Naive thymus-derived CD4-positive, alpha-beta T cell (primary cell): ENCODE measurements at regions of chr19 and their contacts with region 1.

Region 1: GRCh38 chr19:57362997-57363705 is at the starts of genes TRAPPC2B and ZNF547:
- DNase-seq: peak; percentile 89 to 99 (median 98)
- ATAC-seq: peak; percentile 97
- H3K4me3 ChIP-seq: peak within 1 kb of the TSS; percentile 74
- H3K4me3 Mint-ChIP-seq: peak within 1 kb of the TSS; percentile 90 to 97 (median 94)
- H3K27ac ChIP-seq: peak within 1 kb of the TSS; percentile 84
- H3K27ac Mint-ChIP-seq: peak within 1 kb of the TSS; percentile 94 to 100 (median 97)
- H3K4me1 ChIP-seq: peaks cover 9 to 14% of the 10 kb centered on the region in 2 donors
- H3K4me1 Mint-ChIP-seq: peaks cover 12 to 26% (median 18%) of the 10 kb centered on the region in 7 donors
- H3K27me3 ChIP-seq: no peaks in the 10 kb centered on the region
- H3K27me3 Mint-ChIP-seq: peaks cover 0 to 2% (median 0%) of the 10 kb centered on the region in 5 donors
- total RNA-seq, gene TRAPPC2B: 7.7 to 11.8 (median 9.0) TPM
- total RNA-seq, gene ZNF547: 0.40 to 10.1 (median 3.6) TPM

Region 2: DNA sequence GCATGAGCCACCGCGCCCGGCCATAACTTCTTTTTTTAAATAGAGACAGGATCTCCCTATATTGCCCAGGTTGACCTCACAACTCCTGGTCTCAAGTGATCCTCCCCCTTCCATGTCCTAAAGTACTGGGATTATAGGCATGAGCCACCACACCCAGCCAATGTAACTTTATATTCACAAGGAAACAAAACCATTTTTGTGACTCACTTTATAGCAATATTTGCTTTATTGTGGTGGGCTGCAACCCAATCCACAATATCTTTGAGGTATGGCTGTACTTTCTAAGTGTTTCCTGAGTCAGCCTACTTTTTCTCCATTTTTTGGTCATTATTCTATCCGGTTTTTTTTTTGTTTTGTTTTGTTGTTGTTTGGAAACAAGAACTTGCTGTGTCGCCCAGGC is 210.2 kb before region 1 on chr19:
- CTCF ChIA-PET with region 1: no interaction called
- POLR2A ChIA-PET with region 1: no interaction called
- intact Hi-C with region 1: no loop called
- DNase-seq: no peak
- ATAC-seq: no peak
- H3K4me3 ChIP-seq: no peak overlapping the region
- H3K4me3 Mint-ChIP-seq: no peak overlapping the region
- H3K27ac ChIP-seq: no peak overlapping the region
- H3K27ac Mint-ChIP-seq: no peak overlapping the region
- H3K4me1 ChIP-seq: no peaks in the 10 kb centered on the region
- H3K4me1 Mint-ChIP-seq: no peaks in the 10 kb centered on the region
- H3K27me3 ChIP-seq: no peaks in the 10 kb centered on the region
- H3K27me3 Mint-ChIP-seq: no peaks in the 10 kb centered on the region

Region 3: GRCh38 chr19:57279418-57280066 is 83.6 kb before region 1 on chr19:
- CTCF ChIA-PET with region 1: no interaction called
- POLR2A ChIA-PET with region 1: no interaction called
- intact Hi-C with region 1: loop called (anchors 1 kb)
- DNase-seq: peak in 6 of 9 donors; percentile 60 to 81 (median 78)
- ATAC-seq: peak; percentile 85
- H3K4me3 ChIP-seq: peak overlapping the region; percentile 80
- H3K4me3 Mint-ChIP-seq: no peak overlapping the region
- H3K27ac ChIP-seq: peak overlapping the region; percentile 98
- H3K27ac Mint-ChIP-seq: peak overlapping the region in 2 of 9 donors; percentile 6 to 51
- H3K4me1 ChIP-seq: peaks cover 18 to 23% of the 10 kb centered on the region in 2 donors
- H3K4me1 Mint-ChIP-seq: peaks cover 7 to 33% (median 25%) of the 10 kb centered on the region in 7 donors
- H3K27me3 ChIP-seq: no peaks in the 10 kb centered on the region
- H3K27me3 Mint-ChIP-seq: no peaks in the 10 kb centered on the region

Region 4: GRCh38 chr19:57410877-57411671 is 47.9 kb after region 1 on chr19 and contains the start of gene ZNF17:
- CTCF ChIA-PET with region 1: no interaction called
- POLR2A ChIA-PET with region 1: no interaction called
- intact Hi-C with region 1: loop called (anchors 1 kb)
- DNase-seq: peak; percentile 72 to 95 (median 88)
- ATAC-seq: peak; percentile 100
- H3K4me3 ChIP-seq: peak within 1 kb of the TSS; percentile 80
- H3K4me3 Mint-ChIP-seq: peak within 1 kb of the TSS; percentile 85 to 97 (median 96)
- H3K27ac ChIP-seq: peak within 1 kb of the TSS; percentile 80
- H3K27ac Mint-ChIP-seq: peak within 1 kb of the TSS; percentile 78 to 96 (median 92)
- H3K4me1 ChIP-seq: peaks cover 3 to 8% of the 10 kb centered on the region in 2 donors
- H3K4me1 Mint-ChIP-seq: peaks cover 20 to 46% (median 34%) of the 10 kb centered on the region in 7 donors
- H3K27me3 ChIP-seq: no peaks in the 10 kb centered on the region
- H3K27me3 Mint-ChIP-seq: no peaks in the 10 kb centered on the region
- total RNA-seq, gene ZNF17: 9.3 to 27.8 (median 17.2) TPM

Region 5: GRCh38 chr19:57559404-57560025 is 196.4 kb after region 1 on chr19 and contains the start of gene ZNF550:
- CTCF ChIA-PET with region 1: no interaction called
- POLR2A ChIA-PET with region 1: no interaction called
- intact Hi-C with region 1: loop called in 1 of 2 experiments (anchors 1 kb)
- DNase-seq: peak; percentile 71 to 85 (median 84)
- ATAC-seq: peak; percentile 99
- H3K4me3 ChIP-seq: peak within 1 kb of the TSS; percentile 89
- H3K4me3 Mint-ChIP-seq: peak within 1 kb of the TSS; percentile 87 to 99 (median 98)
- H3K27ac ChIP-seq: peak within 1 kb of the TSS; percentile 82
- H3K27ac Mint-ChIP-seq: peak within 1 kb of the TSS; percentile 81 to 96 (median 91)
- H3K4me1 ChIP-seq: peaks cover 16 to 19% of the 10 kb centered on the region in 2 donors
- H3K4me1 Mint-ChIP-seq: peaks cover 21 to 45% (median 33%) of the 10 kb centered on the region in 7 donors
- H3K27me3 ChIP-seq: no peaks in the 10 kb centered on the region
- H3K27me3 Mint-ChIP-seq: peaks cover 0 to 16% (median 4%) of the 10 kb centered on the region in 5 donors
- total RNA-seq, gene ZNF550: 12.9 to 56.2 (median 23.5) TPM

Region 6: DNA sequence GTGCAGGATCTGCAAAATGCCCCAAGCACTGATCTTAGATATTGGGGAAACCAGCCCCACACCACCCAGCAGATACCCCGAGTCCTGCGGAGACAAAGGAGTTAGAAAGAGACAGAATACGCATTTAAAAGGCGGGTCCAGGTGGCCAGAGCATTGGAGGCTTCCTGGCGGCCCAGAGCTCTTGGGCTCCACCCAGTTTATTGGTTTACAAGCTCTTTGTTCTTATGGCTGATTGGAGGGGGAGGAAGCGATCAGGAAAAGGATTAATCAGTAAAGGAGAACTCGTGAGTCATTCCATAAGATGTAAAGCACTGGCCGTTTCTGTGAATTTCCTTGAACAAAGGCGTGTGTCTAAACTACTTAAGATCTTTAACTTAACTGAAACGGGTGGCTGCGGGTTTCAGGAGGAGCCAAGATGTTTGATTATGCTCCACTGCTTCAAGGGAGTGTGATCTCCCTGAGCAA is 487.4 kb after region 1 on chr19:
- CTCF ChIA-PET with region 1: no interaction called
- POLR2A ChIA-PET with region 1: no interaction called
- intact Hi-C with region 1: loop called in 1 of 2 experiments (anchors 5 kb)
- DNase-seq: no peak
- ATAC-seq: no peak
- H3K4me3 ChIP-seq: peak overlapping the region; percentile 72
- H3K4me3 Mint-ChIP-seq: peak overlapping the region; percentile 93 to 97 (median 94)
- H3K27ac ChIP-seq: peak overlapping the region; percentile 92
- H3K27ac Mint-ChIP-seq: peak overlapping the region; percentile 90 to 98 (median 95)
- H3K4me1 ChIP-seq: peaks cover 7 to 11% of the 10 kb centered on the region in 2 donors
- H3K4me1 Mint-ChIP-seq: peaks cover 22 to 32% (median 28%) of the 10 kb centered on the region in 7 donors
- H3K27me3 ChIP-seq: no peaks in the 10 kb centered on the region
- H3K27me3 Mint-ChIP-seq: no peaks in the 10 kb centered on the region

Region 7: DNA sequence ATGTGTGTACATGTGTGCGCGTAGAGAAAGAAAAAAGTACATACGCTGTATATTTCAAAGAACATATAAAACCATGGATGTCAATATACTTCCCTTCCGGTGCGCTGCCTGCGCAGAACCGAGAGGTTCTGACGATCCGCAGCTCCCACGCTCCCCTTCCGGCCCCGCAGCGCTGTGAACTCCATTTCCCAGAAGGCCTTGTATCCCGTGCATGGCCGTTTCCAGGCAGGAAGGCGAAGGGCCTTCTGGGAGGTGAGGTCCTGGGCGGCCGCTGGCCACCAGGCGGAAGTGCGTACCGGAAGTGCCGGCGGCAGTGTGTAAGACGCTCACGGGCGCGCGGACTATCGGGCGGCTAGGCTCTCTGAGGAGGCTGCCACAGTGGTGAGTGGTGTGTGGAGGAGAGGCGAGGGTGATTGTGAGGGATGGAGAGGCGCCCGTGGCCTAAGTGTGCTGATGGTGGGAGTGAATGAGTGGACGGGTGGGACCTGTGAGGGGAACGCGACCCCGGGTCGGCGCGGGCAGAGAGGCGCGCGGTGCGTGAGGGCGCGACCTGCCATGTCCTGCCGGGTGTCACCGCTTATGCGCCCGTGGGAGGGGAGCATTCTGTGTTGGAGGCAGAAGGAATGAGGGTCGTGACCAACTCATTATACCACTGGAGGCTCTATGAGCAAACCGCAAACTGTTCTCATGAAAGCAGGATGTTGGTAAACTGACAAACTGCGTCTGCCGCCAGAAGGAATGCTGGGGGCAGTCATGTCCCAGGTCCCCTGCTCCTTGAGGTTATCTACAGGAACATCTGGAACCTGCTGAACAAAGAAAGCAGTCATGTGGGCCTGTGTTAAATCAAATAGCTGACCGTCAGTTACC is 942.1 kb after region 1 on chr19 and contains the start of gene ERVK3-1:
- CTCF ChIA-PET with region 1: no interaction called
- POLR2A ChIA-PET with region 1: no interaction called
- intact Hi-C with region 1: loop called (anchors 1 kb)
- DNase-seq: peak; percentile 80 to 95 (median 93)
- ATAC-seq: peak; percentile 99
- H3K4me3 ChIP-seq: peak within 1 kb of the TSS; percentile 69
- H3K4me3 Mint-ChIP-seq: peak within 1 kb of the TSS; percentile 94 to 100 (median 98)
- H3K27ac ChIP-seq: peak within 1 kb of the TSS; percentile 91
- H3K27ac Mint-ChIP-seq: peak within 1 kb of the TSS; percentile 98 to 100 (median 99)
- H3K4me1 ChIP-seq: peaks cover 14 to 20% of the 10 kb centered on the region in 2 donors
- H3K4me1 Mint-ChIP-seq: peaks cover 33 to 64% (median 55%) of the 10 kb centered on the region in 7 donors
- H3K27me3 ChIP-seq: no peaks in the 10 kb centered on the region
- H3K27me3 Mint-ChIP-seq: no peaks in the 10 kb centered on the region
- total RNA-seq, gene ERVK3-1: 59.7 to 122 (median 65.4) TPM